OCI-LY7 (cell line): ENCODE measurements at regions of chr20 and their contacts with region 1.

Region 1: GRCh38 chr20:7859356-7859802 is 80.9 kb downstream of the HAO1 start:
- DNase-seq: peak; percentile 78
- H3K4me3 ChIP-seq: no peak overlapping the region
- H3K27ac ChIP-seq: peak overlapping the region; percentile 27
- H3K4me1 ChIP-seq: peaks cover 30% of the 10 kb centered on the region
- CTCF ChIP-seq: peak; percentile 93

Region 2: GRCh38 chr20:6829510-6830116 is 1029.8 kb before region 1 on chr20:
- CTCF ChIA-PET with region 1: no interaction called
- POLR2A ChIA-PET with region 1: no interaction called
- intact Hi-C with region 1: loop called (anchors 5 kb)
- DNase-seq: no peak
- H3K4me3 ChIP-seq: no peak overlapping the region
- H3K27ac ChIP-seq: no peak overlapping the region
- H3K4me1 ChIP-seq: no peaks in the 10 kb centered on the region
- CTCF ChIP-seq: no peak

Region 3: DNA sequence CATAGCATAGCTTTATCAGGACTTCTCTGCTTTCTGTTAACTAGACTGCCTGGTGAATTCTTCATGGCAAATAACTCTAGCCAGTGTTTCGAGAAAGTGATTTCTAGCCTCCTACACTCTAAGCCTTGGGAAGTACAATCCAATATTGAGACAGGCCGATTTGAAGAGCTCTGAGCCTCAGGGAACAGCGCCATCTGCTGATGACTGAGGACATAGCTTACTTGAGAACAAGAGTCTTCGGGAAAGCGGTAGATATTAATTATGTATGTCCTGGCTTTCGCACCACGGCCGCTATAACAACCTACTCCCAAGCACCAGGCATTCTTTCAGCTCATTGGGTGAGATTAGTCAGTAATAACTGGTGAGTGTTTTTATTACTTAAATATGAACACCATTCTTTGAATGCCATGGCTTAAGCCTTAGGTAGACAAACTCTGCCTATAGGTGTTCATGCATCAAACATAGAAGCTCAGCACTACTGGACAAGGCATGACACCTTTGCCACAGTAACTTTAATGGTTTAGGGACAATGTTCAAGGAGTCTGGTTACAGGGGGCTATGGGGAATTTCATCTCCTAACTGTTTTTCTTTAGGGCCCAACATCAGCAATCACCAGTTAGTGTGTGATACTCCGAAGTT is 573.3 kb before region 1 on chr20:
- CTCF ChIA-PET with region 1: no interaction called
- POLR2A ChIA-PET with region 1: no interaction called
- intact Hi-C with region 1: loop called (anchors 5 kb)
- DNase-seq: peak; percentile 66
- H3K4me3 ChIP-seq: no peak overlapping the region
- H3K27ac ChIP-seq: no peak overlapping the region
- H3K4me1 ChIP-seq: no peaks in the 10 kb centered on the region
- CTCF ChIP-seq: peak; percentile 87

Region 4: GRCh38 chr20:7503501-7503900 is 355.9 kb before region 1 on chr20:
- CTCF ChIA-PET with region 1: no interaction called
- POLR2A ChIA-PET with region 1: no interaction called
- intact Hi-C with region 1: loop called (anchors 5 kb)
- DNase-seq: no peak
- H3K4me3 ChIP-seq: no peak overlapping the region
- H3K27ac ChIP-seq: no peak overlapping the region
- H3K4me1 ChIP-seq: no peaks in the 10 kb centered on the region
- CTCF ChIP-seq: no peak

Region 5: GRCh38 chr20:7758406-7758805 is 101.0 kb before region 1 on chr20:
- CTCF ChIA-PET with region 1: no interaction called
- POLR2A ChIA-PET with region 1: no interaction called
- intact Hi-C with region 1: loop called (anchors 5 kb)
- DNase-seq: no peak
- H3K4me3 ChIP-seq: no peak overlapping the region
- H3K27ac ChIP-seq: no peak overlapping the region
- H3K4me1 ChIP-seq: peaks cover 44% of the 10 kb centered on the region
- CTCF ChIP-seq: no peak